ENCODE measurements at regions of chr1 and their contacts with region 1.

Region 1: GRCh38 chr1:205791568-205792180 is 16.4 kb upstream of the RAB29 start:
- DNase-seq: no peak
- H3K4me3 ChIP-seq: no peak overlapping the region
- H3K27me3 ChIP-seq: no peaks in the 10 kb centered on the region
- CTCF ChIP-seq: peak; percentile 87

Region 2: GRCh38 chr1:205805082-205805712 is 13.5 kb after region 1 on chr1:
- CTCF ChIA-PET with region 1: interaction called, 29 read pairs
- POLR2A ChIA-PET with region 1: no interaction called
- DNase-seq: no peak
- H3K4me3 ChIP-seq: no peak overlapping the region
- H3K27me3 ChIP-seq: no peaks in the 10 kb centered on the region
- CTCF ChIP-seq: no peak

Region 3: GRCh38 chr1:205827623-205828022 is 35.9 kb after region 1 on chr1:
- CTCF ChIA-PET with region 1: interaction called, 10 read pairs
- POLR2A ChIA-PET with region 1: no interaction called
- DNase-seq: no peak
- H3K4me3 ChIP-seq: no peak overlapping the region
- H3K27me3 ChIP-seq: peaks cover 1% of the 10 kb centered on the region; the same call in 1 of the 2 replicates
- CTCF ChIP-seq: no peak

Region 4: GRCh38 chr1:205913451-205914155 is 121.9 kb after region 1 on chr1:
- CTCF ChIA-PET with region 1: interaction called, 61 read pairs
- POLR2A ChIA-PET with region 1: no interaction called
- DNase-seq: no peak
- H3K4me3 ChIP-seq: no peak overlapping the region
- H3K27me3 ChIP-seq: no peaks in the 10 kb centered on the region
- CTCF ChIP-seq: no peak

Region 5: DNA sequence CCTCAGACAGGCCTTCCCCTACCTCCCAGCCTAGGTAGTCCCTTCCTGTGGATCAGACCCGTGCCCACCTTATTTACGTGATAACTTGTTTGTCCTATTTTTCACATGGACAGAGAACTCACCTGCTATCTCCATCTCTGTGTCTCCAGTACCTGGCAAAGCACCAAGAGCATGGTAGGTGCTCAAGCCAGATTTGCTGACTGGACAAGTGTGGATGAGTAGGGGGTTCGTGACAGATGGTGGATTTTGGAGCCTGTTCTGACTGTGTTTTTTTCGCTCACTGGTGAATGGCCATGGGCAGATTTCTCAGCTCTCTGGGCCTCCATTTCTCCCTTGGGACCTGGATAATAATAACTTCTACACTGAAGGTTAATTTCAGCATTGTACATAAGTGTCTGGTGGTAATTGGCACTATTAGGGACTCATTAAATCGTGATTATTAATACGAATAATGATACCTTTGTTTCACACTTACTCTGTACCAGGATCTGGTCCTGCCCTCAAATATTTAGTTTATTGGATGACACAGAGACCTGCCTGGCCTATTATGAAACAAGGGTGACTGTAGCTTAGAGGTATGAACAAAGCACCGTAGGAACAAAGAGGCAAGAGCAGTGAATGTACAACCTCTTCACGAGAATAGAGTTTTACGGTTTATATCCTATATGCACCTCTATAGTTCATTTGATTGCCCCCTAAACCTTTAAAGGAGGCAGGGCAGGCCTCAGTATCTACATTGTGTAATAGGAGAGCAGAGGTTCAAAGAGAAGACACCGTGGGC is 176.1 kb after region 1 on chr1:
- CTCF ChIA-PET with region 1: interaction called, 10 read pairs
- POLR2A ChIA-PET with region 1: no interaction called
- DNase-seq: no peak
- H3K4me3 ChIP-seq: no peak overlapping the region
- H3K27me3 ChIP-seq: no peaks in the 10 kb centered on the region
- CTCF ChIP-seq: no peak